Caco-2 (cell line): ENCODE measurements at regions of chr7 and their contacts with region 1.

Region 1: GRCh38 chr7:25894902-25895791 is 256.9 kb upstream of the NFE2L3 start:
- DNase-seq: peak; percentile 46 to 61
- H3K4me3 ChIP-seq: no peak overlapping the region
- H3K4me3 Mint-ChIP-seq: peak overlapping the region; percentile 49
- H3K27ac Mint-ChIP-seq: no peak overlapping the region
- H3K4me1 ChIP-seq: peaks cover 7% of the 10 kb centered on the region
- H3K4me1 Mint-ChIP-seq: peaks cover 8% of the 10 kb centered on the region
- H3K27me3 ChIP-seq: no peaks in the 10 kb centered on the region
- H3K27me3 Mint-ChIP-seq: peaks cover 6% of the 10 kb centered on the region
- CTCF ChIP-seq: peak; percentile 53 to 61

Region 2: GRCh38 chr7:25951031-25951948 is 56.1 kb after region 1 on chr7:
- CTCF ChIA-PET with region 1: no interaction called
- POLR2A ChIA-PET with region 1: no interaction called
- intact Hi-C with region 1: loop called (anchors 5 kb)
- DNase-seq: peak; percentile 97 to 98
- H3K4me3 ChIP-seq: peak overlapping the region; percentile 77
- H3K4me3 Mint-ChIP-seq: peak overlapping the region; percentile 80
- H3K27ac Mint-ChIP-seq: peak overlapping the region; percentile 63
- H3K4me1 ChIP-seq: peaks cover 16% of the 10 kb centered on the region; the same call in 1 of the 2 replicates
- H3K4me1 Mint-ChIP-seq: peaks cover 29% of the 10 kb centered on the region
- H3K27me3 ChIP-seq: no peaks in the 10 kb centered on the region
- H3K27me3 Mint-ChIP-seq: no peaks in the 10 kb centered on the region
- CTCF ChIP-seq: no peak

Region 3: DNA sequence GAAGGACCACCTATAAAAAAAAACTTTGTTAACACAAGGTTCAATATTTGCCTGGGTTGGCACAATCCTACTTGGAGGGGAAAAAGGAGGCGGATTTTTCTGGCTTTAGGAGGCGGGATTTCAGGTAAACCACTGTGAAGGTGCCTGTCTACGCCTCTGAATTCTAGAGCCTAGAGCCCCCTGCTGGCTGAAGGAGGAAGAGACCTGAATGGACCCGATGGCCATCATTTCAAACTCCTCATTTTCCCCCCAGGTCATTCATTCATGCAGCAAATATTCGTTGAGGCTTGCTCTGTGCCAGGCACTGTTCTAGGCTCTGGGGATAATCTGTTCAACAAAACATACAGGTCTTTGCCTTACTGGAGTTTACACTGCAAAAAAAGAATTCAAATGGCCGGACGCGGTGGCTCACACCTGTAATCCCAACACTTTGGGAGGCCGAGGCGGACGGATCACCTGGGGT is 166.6 kb after region 1 on chr7:
- CTCF ChIA-PET with region 1: no interaction called
- POLR2A ChIA-PET with region 1: no interaction called
- intact Hi-C with region 1: loop called (anchors 1 kb)
- DNase-seq: peak; percentile 82 to 87
- H3K4me3 ChIP-seq: no peak overlapping the region
- H3K4me3 Mint-ChIP-seq: no peak overlapping the region
- H3K27ac Mint-ChIP-seq: no peak overlapping the region
- H3K4me1 ChIP-seq: 0 out of 2 replicates have a peak, but pooled peaks cover 7% of the 10 kb centered on the region
- H3K4me1 Mint-ChIP-seq: peaks cover 7% of the 10 kb centered on the region
- H3K27me3 ChIP-seq: no peaks in the 10 kb centered on the region
- H3K27me3 Mint-ChIP-seq: no peaks in the 10 kb centered on the region
- CTCF ChIP-seq: peak; percentile 88 to 91

Region 4: GRCh38 chr7:26187380-26188205 is 292.4 kb after region 1 on chr7:
- CTCF ChIA-PET with region 1: no interaction called
- POLR2A ChIA-PET with region 1: no interaction called
- intact Hi-C with region 1: loop called (anchors 5 kb)
- DNase-seq: no peak
- H3K4me3 ChIP-seq: no peak overlapping the region
- H3K4me3 Mint-ChIP-seq: peak overlapping the region; percentile 14
- H3K27ac Mint-ChIP-seq: peak overlapping the region; percentile 15
- H3K4me1 ChIP-seq: 0 out of 2 replicates have a peak, but pooled peaks cover 2% of the 10 kb centered on the region
- H3K4me1 Mint-ChIP-seq: peaks cover 30% of the 10 kb centered on the region
- H3K27me3 ChIP-seq: no peaks in the 10 kb centered on the region
- H3K27me3 Mint-ChIP-seq: no peaks in the 10 kb centered on the region
- CTCF ChIP-seq: no peak

Region 5: DNA sequence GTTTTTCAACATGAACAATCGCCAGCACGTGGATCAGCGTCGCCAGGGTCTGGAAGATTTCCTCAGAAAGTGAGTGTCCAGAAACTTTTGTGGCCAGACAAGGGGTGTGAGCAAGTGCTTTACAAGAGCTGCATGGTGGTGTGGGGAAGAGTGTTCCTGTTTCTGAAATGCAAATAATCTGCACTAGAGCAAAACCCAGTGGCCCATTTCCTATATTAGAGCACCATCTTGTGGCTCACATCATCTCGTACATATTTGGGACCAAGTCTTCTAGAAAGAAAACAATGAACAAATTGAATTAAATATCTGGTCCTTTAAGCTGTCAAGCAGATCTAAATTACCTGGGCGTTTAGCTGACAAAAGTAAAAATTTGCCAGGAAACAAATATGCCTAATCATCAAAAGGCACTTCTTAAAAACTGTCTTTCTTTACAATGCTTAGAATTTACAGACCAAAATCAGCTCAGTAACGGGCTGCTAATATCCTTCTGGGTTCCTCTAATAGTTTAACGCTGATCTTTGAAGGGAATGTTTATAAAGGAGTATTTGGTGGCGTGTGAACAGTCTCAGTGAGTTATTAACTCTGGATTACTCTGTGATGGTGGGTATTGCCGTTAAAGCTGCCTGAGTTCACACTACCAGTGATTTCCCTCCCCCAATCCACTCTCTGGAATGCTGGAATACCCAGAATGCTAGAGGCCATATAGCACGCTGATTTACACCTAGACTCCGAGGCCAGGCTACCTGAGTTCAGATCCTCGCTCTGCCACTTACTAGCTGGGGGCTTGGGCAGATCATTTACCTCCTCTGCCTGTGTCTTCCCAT is 470.1 kb after region 1 on chr7:
- CTCF ChIA-PET with region 1: interaction called, 40 read pairs
- POLR2A ChIA-PET with region 1: no interaction called
- intact Hi-C with region 1: loop called (anchors 1 kb)
- DNase-seq: peak; percentile 55 to 70
- H3K4me3 ChIP-seq: no peak overlapping the region
- H3K4me3 Mint-ChIP-seq: peak overlapping the region; percentile 49
- H3K27ac Mint-ChIP-seq: peak overlapping the region; percentile 53
- H3K4me1 ChIP-seq: no peaks in the 10 kb centered on the region
- H3K4me1 Mint-ChIP-seq: peaks cover 10% of the 10 kb centered on the region
- H3K27me3 ChIP-seq: no peaks in the 10 kb centered on the region
- H3K27me3 Mint-ChIP-seq: no peaks in the 10 kb centered on the region
- CTCF ChIP-seq: peak; percentile 57 to 84

Region 6: GRCh38 chr7:26667500-26668133 is 772.5 kb after region 1 on chr7:
- CTCF ChIA-PET with region 1: no interaction called
- POLR2A ChIA-PET with region 1: no interaction called
- intact Hi-C with region 1: loop called (anchors 1 kb)
- DNase-seq: peak; percentile 85
- H3K4me3 ChIP-seq: no peak overlapping the region
- H3K4me3 Mint-ChIP-seq: no peak overlapping the region
- H3K27ac Mint-ChIP-seq: no peak overlapping the region
- H3K4me1 ChIP-seq: no peaks in the 10 kb centered on the region
- H3K4me1 Mint-ChIP-seq: no peaks in the 10 kb centered on the region
- H3K27me3 ChIP-seq: no peaks in the 10 kb centered on the region
- H3K27me3 Mint-ChIP-seq: no peaks in the 10 kb centered on the region
- CTCF ChIP-seq: peak; percentile 81 to 87